Vagina (tissue), 2 donors: ENCODE measurements at regions of chr2 and their contacts with region 1.

Region 1: GRCh38 chr2:155054712-155055111 is 356.2 kb downstream of the KCNJ3 start:
- DNase-seq: no peak
- H3K4me3 ChIP-seq: no peak overlapping the region
- H3K27ac ChIP-seq: no peak overlapping the region
- H3K4me1 ChIP-seq: no peaks in the 10 kb centered on the region
- H3K27me3 ChIP-seq: no peaks in the 10 kb centered on the region
- CTCF ChIP-seq: no peak
- POLR2A ChIP-seq: no peak

Region 2: GRCh38 chr2:153268941-153269461 is 1785.7 kb before region 1 on chr2:
- intact Hi-C with region 1: loop called (anchors 5 kb)
- DNase-seq: no peak
- H3K4me3 ChIP-seq: no peak overlapping the region
- H3K27ac ChIP-seq: no peak overlapping the region
- H3K4me1 ChIP-seq: no peaks in the 10 kb centered on the region
- H3K27me3 ChIP-seq: no peaks in the 10 kb centered on the region
- CTCF ChIP-seq: no peak
- POLR2A ChIP-seq: no peak

Region 3: GRCh38 chr2:154408786-154409185 is 645.9 kb before region 1 on chr2:
- intact Hi-C with region 1: no loop called
- DNase-seq: no peak
- H3K4me3 ChIP-seq: no peak overlapping the region
- H3K27ac ChIP-seq: no peak overlapping the region
- H3K4me1 ChIP-seq: no peaks in the 10 kb centered on the region
- H3K27me3 ChIP-seq: no peaks in the 10 kb centered on the region
- CTCF ChIP-seq: no peak
- POLR2A ChIP-seq: no peak

Region 4: GRCh38 chr2:155021618-155022017 is 33.1 kb before region 1 on chr2:
- intact Hi-C with region 1: no loop called
- DNase-seq: no peak
- H3K4me3 ChIP-seq: no peak overlapping the region
- H3K27ac ChIP-seq: no peak overlapping the region
- H3K4me1 ChIP-seq: no peaks in the 10 kb centered on the region
- H3K27me3 ChIP-seq: no peaks in the 10 kb centered on the region
- CTCF ChIP-seq: no peak
- POLR2A ChIP-seq: no peak

Region 5: GRCh38 chr2:155080373-155080772 is 25.7 kb after region 1 on chr2:
- intact Hi-C with region 1: no loop called
- DNase-seq: no peak
- H3K4me3 ChIP-seq: no peak overlapping the region
- H3K27ac ChIP-seq: no peak overlapping the region
- H3K4me1 ChIP-seq: no peaks in the 10 kb centered on the region
- H3K27me3 ChIP-seq: no peaks in the 10 kb centered on the region
- CTCF ChIP-seq: no peak
- POLR2A ChIP-seq: no peak